ENCODE measurements at regions of chr3 and their contacts with region 1.

Region 1: GRCh38 chr3:5057857-5058324 is 64.2 kb upstream of the ARL8B start:
- DNase-seq: peak; percentile 46
- H3K4me3 ChIP-seq: no peak overlapping the region
- CTCF ChIP-seq: peak; percentile 71

Region 2: GRCh38 chr3:4656059-4656458 is 401.8 kb before region 1 on chr3:
- CTCF ChIA-PET with region 1: interaction called, 80 read pairs
- POLR2A ChIA-PET with region 1: no interaction called
- DNase-seq: no peak
- H3K4me3 ChIP-seq: no peak overlapping the region
- CTCF ChIP-seq: peak; percentile 94

Region 3: GRCh38 chr3:4722103-4722502 is 335.8 kb before region 1 on chr3:
- CTCF ChIA-PET with region 1: interaction called, 416 read pairs
- POLR2A ChIA-PET with region 1: interaction called, 3 read pairs
- DNase-seq: no peak
- H3K4me3 ChIP-seq: no peak overlapping the region
- CTCF ChIP-seq: peak; percentile 44

Region 4: DNA sequence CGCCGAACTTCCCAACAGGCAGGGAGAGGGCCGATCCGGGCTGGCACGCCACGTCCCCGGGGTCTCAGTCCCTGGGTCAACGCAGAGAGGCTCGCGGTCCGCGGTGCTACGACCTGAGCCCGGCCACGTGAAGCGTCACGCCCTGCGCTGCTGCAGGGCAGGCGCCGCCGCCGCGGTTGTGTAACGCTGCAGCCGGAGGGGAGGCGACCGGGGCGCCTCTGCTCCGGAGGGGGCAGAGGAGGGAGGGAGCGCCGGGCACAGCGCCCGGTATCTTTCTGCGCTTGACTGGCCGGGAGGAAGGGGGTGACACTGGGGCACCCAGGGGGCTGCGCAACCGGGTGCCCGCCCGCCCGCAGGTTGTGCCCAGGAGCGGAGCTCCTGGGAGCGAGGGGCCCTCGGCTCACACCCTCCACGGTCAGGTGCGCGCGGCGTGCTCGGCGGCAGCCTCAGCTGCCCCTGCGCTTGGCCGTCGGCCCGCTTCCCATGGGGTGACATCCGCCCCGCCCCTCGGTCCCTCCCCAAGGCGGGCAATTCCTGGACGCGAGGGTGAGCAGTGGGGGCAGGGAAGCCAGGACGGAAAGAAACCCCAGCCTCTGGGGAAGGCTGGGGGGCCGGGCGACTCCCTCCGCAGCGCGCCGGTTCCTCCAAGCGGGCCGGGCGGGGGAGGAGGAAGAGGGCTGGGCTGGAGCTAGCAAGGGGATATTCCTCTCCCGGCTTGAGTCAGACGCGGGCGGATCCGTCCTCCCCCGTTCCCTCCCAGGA is 79.5 kb before region 1 on chr3:
- CTCF ChIA-PET with region 1: interaction called, 16 read pairs
- POLR2A ChIA-PET with region 1: interaction called, 16 read pairs
- DNase-seq: peak; percentile 94
- H3K4me3 ChIP-seq: peak overlapping the region; percentile 99
- CTCF ChIP-seq: no peak

Region 5: DNA sequence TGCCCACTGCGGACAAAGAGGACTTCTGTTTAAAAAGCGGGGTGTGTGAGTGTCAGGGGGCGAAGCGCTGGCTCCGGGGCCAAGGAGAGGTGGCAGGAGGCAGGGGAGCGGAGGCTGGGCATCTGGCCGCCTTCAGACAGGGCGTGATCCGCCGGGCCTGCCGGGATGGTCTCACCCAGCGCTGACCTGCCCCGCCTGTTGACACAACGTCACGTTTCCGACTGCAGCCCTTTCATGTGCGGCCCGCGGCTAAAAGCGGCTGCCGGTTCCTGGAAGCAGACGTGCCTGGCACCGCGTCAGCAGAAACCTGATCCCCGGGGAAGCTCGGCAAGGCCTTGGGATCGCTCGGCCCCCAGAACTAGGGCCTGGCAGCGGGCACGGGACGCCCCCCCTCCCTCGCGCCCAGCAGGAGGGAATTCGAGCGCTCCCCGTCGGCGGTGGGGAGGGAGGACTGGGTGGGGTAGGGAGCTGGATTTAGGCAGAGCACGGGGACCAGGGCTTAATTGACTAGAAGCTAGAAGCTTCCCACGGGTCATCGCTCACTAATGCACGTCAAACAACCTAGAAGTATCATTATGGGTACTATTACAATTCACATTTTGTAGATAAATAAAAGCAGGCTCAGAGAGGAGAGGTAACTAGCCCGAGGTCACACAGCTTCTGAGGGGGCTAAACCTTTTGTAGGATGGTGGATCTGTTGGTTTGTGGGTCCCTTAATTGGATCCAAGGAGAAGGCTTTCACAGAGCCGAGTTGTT is 70.9 kb before region 1 on chr3:
- CTCF ChIA-PET with region 1: interaction called, 16 read pairs
- POLR2A ChIA-PET with region 1: interaction called, 16 read pairs
- DNase-seq: peak; percentile 92
- H3K4me3 ChIP-seq: peak overlapping the region; percentile 45
- CTCF ChIP-seq: no peak

Region 6: GRCh38 chr3:5026331-5027218 is 31.3 kb before region 1 on chr3:
- CTCF ChIA-PET with region 1: interaction called, 17 read pairs
- POLR2A ChIA-PET with region 1: interaction called, 14 read pairs
- DNase-seq: peak; percentile 67
- H3K4me3 ChIP-seq: peak overlapping the region; percentile 59
- CTCF ChIP-seq: peak; percentile 84

Measured in AG04449 (cell line).